ENCODE measurements at regions of chr12 and their contacts with region 1.

Region 1: GRCh38 chr12:6423267-6424007 is 21.3 kb upstream of the CD27 start:
- DNase-seq: peak; percentile 77 to 90
- ATAC-seq: peak; percentile 98 to 99
- H3K4me3 ChIP-seq: no peak overlapping the region
- H3K27ac ChIP-seq: peak overlapping the region in 2 of 4 donors; percentile 30 to 56
- H3K4me1 ChIP-seq: peaks cover 0 to 5% of the 10 kb centered on the region in 2 donors
- H3K27me3 ChIP-seq: no peaks in the 10 kb centered on the region
- CTCF ChIP-seq: peak; percentile 88 to 94 (median 91)
- POLR2A ChIP-seq: no peak

Region 2: DNA sequence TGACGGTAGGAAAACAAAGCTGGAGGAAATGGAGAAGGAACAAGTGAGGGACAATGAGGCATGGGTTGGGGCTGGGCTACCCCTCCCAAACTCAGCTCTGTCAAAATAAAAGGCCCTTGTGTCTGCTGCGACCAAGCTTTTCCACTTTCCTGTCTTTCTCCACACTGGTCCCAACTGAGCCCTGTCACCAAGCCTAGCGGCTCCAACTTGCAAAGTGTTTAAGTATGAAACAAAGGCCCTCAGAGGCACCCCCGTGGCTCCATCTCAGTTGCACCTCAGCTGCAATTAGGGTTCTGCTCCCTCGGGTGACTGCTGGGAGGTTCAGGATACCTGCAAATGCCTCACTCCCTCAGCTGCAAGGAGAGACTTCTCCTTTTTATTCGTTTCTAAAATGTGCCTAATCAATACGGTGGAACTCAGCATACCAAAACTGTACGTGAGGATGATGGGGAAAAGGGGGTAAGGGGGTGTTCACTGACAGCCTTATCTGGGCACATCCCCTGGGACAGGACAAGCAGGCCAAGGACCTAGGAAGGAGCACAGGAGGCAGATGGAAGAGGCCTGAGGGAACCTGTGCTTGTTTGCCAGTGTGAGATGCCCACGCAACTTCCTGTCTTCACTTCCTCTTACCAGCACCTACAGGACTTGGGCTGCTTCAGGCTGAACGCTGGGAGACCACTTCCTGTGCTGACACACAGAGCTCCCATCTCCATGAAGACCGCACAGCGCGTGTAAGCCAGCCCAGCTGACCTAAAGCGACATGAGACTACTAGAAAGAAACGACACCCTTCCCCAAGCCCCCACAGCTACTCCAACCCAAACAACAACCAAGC is 38.2 kb after region 1 on chr12:
- in situ Hi-C with region 1: loop called in 2 of 4 experiments (anchors 5 kb)
- intact Hi-C with region 1: loop called (anchors 1 kb)
- DNase-seq: peak in 1 of 2 donors; percentile 45
- ATAC-seq: no peak
- H3K4me3 ChIP-seq: no peak overlapping the region
- H3K27ac ChIP-seq: peak overlapping the region in 3 of 4 donors; percentile 57 to 72 (median 70)
- H3K4me1 ChIP-seq: peaks cover 8 to 14% of the 10 kb centered on the region in 2 donors
- H3K27me3 ChIP-seq: no peaks in the 10 kb centered on the region
- CTCF ChIP-seq: no peak
- POLR2A ChIP-seq: no peak

Region 3: GRCh38 chr12:6540181-6540877 is 116.9 kb after region 1 on chr12:
- in situ Hi-C with region 1: loop called in 2 of 4 experiments (anchors 10 to 25 kb)
- intact Hi-C with region 1: loop called (anchors 1 kb)
- DNase-seq: peak; percentile 78 to 89
- ATAC-seq: peak; percentile 54 to 76
- H3K4me3 ChIP-seq: peak overlapping the region in 2 of 4 donors; percentile 10 to 17
- H3K27ac ChIP-seq: peak overlapping the region; percentile 91 to 97 (median 96)
- H3K4me1 ChIP-seq: peaks cover 34 to 47% of the 10 kb centered on the region in 2 donors
- H3K27me3 ChIP-seq: no peaks in the 10 kb centered on the region
- CTCF ChIP-seq: no peak
- POLR2A ChIP-seq: no peak